ENCODE measurements at regions of chr5 and their contacts with region 1.

Region 1: DNA sequence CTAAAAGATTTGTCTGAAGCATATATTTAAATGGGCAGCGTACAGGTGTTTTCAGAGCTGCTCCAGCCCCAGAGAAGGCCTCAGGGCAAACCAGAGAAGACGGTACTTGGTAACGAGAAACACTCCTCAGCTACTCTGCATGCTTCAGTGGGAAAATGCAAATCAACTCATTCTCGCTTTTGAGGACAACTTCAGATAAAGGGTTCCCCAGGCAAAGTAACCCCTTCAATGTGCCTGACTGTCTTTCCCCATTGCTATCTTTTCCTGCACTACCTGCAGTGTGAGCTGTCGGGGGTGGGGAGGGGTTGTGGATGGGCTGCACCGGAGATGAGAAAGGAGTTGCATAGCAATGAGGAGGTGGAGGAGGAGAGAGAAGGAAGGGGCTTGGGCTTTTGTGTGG is 339.7 kb upstream of the CLINT1 start:
- DNase-seq: peak; percentile 91
- H3K4me3 ChIP-seq: peak overlapping the region; percentile 44
- H3K27ac ChIP-seq: peak overlapping the region; percentile 87
- H3K4me1 ChIP-seq: peaks cover 78% of the 10 kb centered on the region
- CTCF ChIP-seq: no peak

Region 2: GRCh38 chr5:158234323-158235158 is 35.9 kb after region 1 on chr5:
- CTCF ChIA-PET with region 1: no interaction called
- POLR2A ChIA-PET with region 1: interaction called, 3 read pairs
- intact Hi-C with region 1: loop called (anchors 2 kb)
- DNase-seq: peak; percentile 77
- H3K4me3 ChIP-seq: no peak overlapping the region
- H3K27ac ChIP-seq: peak overlapping the region; percentile 17
- H3K4me1 ChIP-seq: peaks cover 24% of the 10 kb centered on the region
- CTCF ChIP-seq: no peak

Region 3: GRCh38 chr5:158255609-158256008 is 57.0 kb after region 1 on chr5:
- CTCF ChIA-PET with region 1: no interaction called
- POLR2A ChIA-PET with region 1: no interaction called
- intact Hi-C with region 1: no loop called
- DNase-seq: no peak
- H3K4me3 ChIP-seq: no peak overlapping the region
- H3K27ac ChIP-seq: no peak overlapping the region
- H3K4me1 ChIP-seq: no peaks in the 10 kb centered on the region
- CTCF ChIP-seq: no peak

Region 4: GRCh38 chr5:158521995-158522394 is 323.4 kb after region 1 on chr5:
- CTCF ChIA-PET with region 1: no interaction called
- POLR2A ChIA-PET with region 1: no interaction called
- intact Hi-C with region 1: no loop called
- DNase-seq: no peak
- H3K4me3 ChIP-seq: no peak overlapping the region
- H3K27ac ChIP-seq: no peak overlapping the region
- H3K4me1 ChIP-seq: no peaks in the 10 kb centered on the region
- CTCF ChIP-seq: no peak

Region 5: DNA sequence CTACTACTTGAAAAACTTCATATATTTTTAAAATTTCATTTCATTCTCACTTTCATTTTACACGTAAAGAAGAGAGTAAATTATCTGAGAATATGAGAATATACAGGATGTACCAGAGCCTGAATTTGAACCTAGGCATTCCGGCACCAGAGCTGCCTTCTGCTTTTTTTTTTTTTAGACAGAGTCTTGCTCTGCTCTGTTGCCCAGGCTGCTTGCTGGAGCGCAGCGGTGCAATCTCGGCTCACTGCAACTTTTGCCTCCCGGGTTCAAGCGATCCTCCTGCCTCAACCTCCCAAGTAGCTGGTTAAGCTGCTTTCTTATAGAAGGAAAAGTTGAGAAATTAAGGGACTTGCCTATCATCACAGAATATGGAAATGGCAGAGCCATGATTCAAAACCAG is 361.0 kb after region 1 on chr5:
- CTCF ChIA-PET with region 1: no interaction called
- POLR2A ChIA-PET with region 1: interaction called, 3 read pairs
- intact Hi-C with region 1: loop called (anchors 5 kb)
- DNase-seq: peak; percentile 68
- H3K4me3 ChIP-seq: peak overlapping the region; percentile 25
- H3K27ac ChIP-seq: no peak overlapping the region
- H3K4me1 ChIP-seq: peaks cover 33% of the 10 kb centered on the region
- CTCF ChIP-seq: no peak

Region 6: GRCh38 chr5:158751961-158752655 is 553.5 kb after region 1 on chr5:
- CTCF ChIA-PET with region 1: no interaction called
- POLR2A ChIA-PET with region 1: no interaction called
- intact Hi-C with region 1: loop called (anchors 5 kb)
- DNase-seq: peak; percentile 91
- H3K4me3 ChIP-seq: peak overlapping the region; percentile 57
- H3K27ac ChIP-seq: peak overlapping the region; percentile 99
- H3K4me1 ChIP-seq: peaks cover 83% of the 10 kb centered on the region
- CTCF ChIP-seq: no peak